Right ventricle myocardium inferior (tissue), 1 donor: ENCODE measurements at regions of chr5 and their contacts with region 1.

Region 1: DNA sequence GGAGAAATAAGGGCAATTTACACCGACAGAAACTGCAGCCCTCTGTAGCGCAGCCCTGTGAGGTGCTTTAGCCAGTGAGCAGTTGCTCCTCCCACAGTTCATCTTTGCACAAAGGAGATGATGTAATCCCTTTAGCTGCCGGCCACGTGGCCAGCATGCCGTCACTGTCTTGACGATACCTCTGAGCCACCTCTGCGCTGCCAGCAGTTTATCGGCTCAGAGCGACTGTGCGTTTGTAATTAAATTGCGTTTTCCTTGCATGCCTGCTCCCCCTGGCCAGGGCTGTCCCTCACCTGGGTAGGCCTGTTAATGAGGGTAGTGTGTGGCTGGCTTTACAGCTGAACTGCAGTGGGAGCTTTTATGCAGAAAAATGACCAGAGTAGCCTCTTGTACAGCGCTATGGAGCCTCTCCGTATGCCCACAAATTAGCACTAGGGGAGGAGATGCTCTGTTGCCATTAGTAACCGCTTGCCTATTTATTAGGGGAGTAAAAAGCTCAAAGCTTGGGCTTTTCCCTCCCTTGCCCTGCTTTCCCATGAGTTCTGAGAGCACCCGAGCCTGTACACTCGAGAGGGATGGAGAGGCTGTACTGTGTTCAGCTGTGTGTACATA is 107.0 kb downstream of the TRIO start:
- DNase-seq: peak; percentile 77
- ATAC-seq: peak; percentile 84

Region 2: GRCh38 chr5:14204785-14205321 is 45.3 kb before region 1 on chr5:
- intact Hi-C with region 1: loop called (anchors 5 kb)
- DNase-seq: no peak
- ATAC-seq: peak; percentile 53